ENCODE measurements at regions of chr4 and their contacts with region 1.

Region 1: DNA sequence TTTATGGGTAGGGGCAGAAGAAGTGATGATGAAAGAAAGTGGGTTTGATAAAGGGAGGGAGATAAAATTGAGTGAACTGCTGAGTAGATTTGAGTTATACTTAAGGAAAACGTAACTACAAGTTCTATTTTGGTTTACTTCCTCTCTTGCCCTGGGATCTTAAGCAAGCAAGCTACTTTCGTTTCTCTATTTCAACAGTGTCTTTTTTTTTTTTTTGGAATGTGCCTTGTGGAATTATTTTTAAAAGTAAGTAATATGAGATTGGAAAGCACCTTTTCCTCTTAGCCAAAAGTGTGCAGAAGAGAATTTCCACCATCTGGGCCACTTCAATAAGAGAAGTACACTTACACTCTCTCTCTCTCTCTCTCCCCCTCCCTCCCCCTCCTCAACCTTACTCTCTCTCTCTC is 16.0 kb upstream of the C4orf36 start:
- DNase-seq: no peak
- ATAC-seq: no peak
- H3K4me3 ChIP-seq: no peak overlapping the region
- H3K27ac ChIP-seq: no peak overlapping the region
- H3K4me1 ChIP-seq: no peaks in the 10 kb centered on the region
- H3K27me3 ChIP-seq: no peaks in the 10 kb centered on the region
- CTCF ChIP-seq: no peak

Region 2: DNA sequence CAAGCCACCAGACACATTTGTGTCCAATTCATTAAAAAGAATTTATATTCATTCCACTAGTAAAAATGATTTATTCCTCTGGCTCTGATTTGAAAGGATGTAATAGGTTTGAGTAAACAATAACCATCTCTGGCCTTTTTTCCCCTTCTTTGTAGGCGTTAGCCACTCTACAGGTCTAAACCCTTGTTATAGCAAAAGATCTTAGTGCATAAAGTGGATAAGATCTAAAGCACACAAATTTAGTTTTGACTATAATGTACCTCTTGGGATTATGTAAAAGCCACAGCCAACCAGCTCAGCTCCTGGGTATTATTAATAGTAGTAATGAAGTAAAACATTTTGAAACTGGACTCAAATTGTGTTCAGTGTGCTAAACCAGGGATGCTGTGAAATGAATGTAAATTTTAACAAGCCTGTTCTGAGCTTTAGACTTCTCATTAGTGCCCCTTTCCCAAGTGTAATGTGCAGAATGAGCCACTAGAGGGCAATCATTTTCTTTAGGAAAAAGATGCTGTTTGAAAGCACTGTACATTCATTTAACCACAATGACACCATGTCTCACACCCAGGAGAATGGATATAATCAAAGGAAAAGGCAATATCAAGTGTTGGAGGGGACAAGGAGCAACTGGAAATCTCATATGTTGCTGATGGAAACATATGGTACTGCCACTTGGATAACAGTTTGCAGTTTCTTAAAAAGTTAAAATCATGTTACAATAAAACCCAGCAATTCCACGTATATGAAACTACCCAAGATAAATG is 242.4 kb after region 1 on chr4:
- CTCF ChIA-PET with region 1: no interaction called
- POLR2A ChIA-PET with region 1: interaction called, 10 read pairs
- in situ Hi-C with region 1: no loop called
- intact Hi-C with region 1: no loop called
- DNase-seq: peak; percentile 57
- ATAC-seq: peak; percentile 86
- H3K4me3 ChIP-seq: no peak overlapping the region
- H3K27ac ChIP-seq: no peak overlapping the region
- H3K4me1 ChIP-seq: no peaks in the 10 kb centered on the region
- H3K27me3 ChIP-seq: no peaks in the 10 kb centered on the region
- CTCF ChIP-seq: peak; percentile 71; the same call in 1 of the 2 replicates